B cell (primary cell): ENCODE measurements at regions of chr19 and their contacts with region 1.

Region 1: DNA sequence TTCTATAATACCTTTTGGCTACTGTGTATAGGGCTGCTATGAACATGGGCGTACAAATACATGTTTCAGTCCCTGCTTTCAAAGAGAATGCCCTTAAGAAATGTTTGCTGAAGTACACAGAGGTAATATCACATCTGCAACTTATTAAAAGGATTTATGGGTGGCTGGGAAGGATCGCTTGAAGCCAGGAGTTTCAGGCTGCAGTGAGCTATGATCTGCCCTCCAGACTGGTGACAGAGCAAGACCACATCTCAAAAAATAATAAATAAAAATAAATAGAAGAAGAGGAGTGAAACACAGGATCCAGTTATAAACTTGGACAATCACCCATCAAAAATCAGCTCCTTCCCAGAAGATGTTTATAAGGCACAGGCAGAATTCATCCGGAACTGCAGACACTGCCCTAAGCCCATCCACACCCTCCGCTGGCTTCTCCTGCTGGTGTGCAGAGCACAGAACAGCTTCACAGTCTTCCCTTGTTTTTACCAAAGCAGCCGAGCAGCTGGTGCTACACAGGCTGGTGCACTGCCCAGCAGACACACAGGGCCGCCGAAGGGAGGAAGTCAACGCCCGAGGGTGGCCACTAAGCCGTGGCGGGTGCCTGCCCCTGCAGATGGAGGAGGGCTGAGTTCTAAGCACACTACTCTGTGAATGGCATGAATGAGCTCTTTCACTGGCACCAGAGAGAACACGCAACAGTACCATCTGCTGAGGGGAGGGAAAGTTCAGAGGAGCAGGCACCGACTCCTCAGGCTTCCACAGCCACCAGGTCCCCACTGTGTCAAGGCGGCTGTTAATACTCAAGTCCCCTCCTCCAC is 44.0 kb downstream of the BRD4 start:
- DNase-seq: peak; percentile 76
- ATAC-seq: peak; percentile 88
- H3K4me3 ChIP-seq: peak overlapping the region in 4 of 5 experiments; percentile 4 to 35 (median 24)
- H3K4me3 Mint-ChIP-seq: peak overlapping the region; percentile 83
- H3K27ac ChIP-seq: peak overlapping the region; percentile 67 to 71
- H3K27ac Mint-ChIP-seq: peak overlapping the region; percentile 91
- H3K4me1 ChIP-seq: peaks cover 95 to 98% of the 10 kb centered on the region in 2 donors
- H3K4me1 Mint-ChIP-seq: peaks cover 95% of the 10 kb centered on the region
- H3K27me3 ChIP-seq: no peaks in the 10 kb centered on the region
- H3K27me3 Mint-ChIP-seq: no peaks in the 10 kb centered on the region
- CTCF ChIP-seq: no peak

Region 2: DNA sequence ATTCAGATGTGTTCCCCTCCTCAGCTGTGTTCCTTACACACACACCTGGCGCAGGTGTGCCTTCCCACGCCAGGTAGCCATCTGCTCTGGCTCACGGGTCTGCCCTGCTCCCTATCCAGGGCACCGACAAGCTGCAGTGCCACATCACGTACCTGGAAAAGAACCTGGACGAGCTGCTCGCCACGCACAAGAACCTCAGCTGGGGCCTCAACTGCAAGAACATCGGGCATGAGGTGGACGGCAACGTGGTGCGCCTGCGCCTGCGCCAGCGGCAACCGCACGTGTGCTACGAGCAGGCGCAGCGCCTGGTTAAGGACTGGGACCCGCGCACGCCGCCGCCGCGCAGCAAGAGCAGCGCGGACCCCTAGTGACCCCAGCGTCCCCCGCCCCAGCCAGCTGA is 265.6 kb before region 1 on chr19:
- CTCF ChIA-PET with region 1: no interaction called
- POLR2A ChIA-PET with region 1: no interaction called
- intact Hi-C with region 1: no loop called
- DNase-seq: no peak
- ATAC-seq: no peak
- H3K4me3 ChIP-seq: no peak overlapping the region
- H3K4me3 Mint-ChIP-seq: no peak overlapping the region
- H3K27ac ChIP-seq: no peak overlapping the region
- H3K27ac Mint-ChIP-seq: no peak overlapping the region
- H3K4me1 ChIP-seq: no peaks in the 10 kb centered on the region
- H3K4me1 Mint-ChIP-seq: no peaks in the 10 kb centered on the region
- H3K27me3 ChIP-seq: peaks cover 0 to 7% (median 0%) of the 10 kb centered on the region in 4 experiments
- H3K27me3 Mint-ChIP-seq: peaks cover 10% of the 10 kb centered on the region
- CTCF ChIP-seq: no peak

Region 3: DNA sequence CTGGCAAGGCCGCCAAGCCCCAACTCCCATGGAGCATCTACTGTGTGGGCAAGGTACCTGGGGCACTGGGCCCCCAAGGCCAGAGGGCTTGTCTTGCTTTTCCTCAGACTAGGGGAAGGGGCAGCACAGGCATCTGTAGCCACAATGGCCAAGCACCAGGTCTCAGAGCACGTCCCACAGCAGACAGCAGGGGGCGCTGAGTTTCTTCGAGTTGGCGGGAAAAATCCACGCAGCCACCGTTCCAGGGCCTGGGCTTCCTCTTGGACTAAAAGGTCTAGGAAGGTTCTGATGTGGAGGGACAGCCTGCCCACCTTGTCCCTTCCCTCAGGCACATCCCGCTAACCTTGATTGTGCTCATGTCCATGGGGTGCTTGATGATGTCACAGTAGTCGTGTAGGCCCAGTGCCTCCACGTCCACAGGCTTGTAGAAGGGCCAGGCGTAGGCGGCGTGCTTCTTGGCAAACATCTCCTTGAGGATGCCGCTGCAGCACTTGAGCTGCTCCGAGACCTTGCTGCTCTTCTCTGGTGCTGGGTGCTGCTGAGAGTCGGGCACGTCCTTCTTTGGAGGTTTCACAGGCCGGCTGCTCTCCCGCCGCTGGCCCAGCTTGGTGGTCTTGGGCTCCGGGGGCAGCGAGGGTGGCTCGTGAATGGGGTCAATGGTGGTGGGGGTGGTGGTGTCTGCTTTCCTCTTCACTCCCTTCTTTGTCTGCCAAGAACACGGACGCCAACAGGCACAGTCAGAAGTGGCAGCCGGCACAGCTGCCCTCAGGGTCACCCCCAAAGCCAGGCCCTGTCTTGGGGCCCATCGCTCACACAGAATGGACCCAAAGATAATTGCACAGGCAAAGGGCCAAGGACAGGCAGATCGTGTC is 24.1 kb before region 1 on chr19:
- CTCF ChIA-PET with region 1: interaction called, 8 read pairs
- POLR2A ChIA-PET with region 1: no interaction called
- intact Hi-C with region 1: loop called (anchors 1 kb)
- DNase-seq: peak; percentile 82
- ATAC-seq: peak; percentile 67
- H3K4me3 ChIP-seq: no peak overlapping the region
- H3K4me3 Mint-ChIP-seq: no peak overlapping the region
- H3K27ac ChIP-seq: no peak overlapping the region
- H3K27ac Mint-ChIP-seq: no peak overlapping the region
- H3K4me1 ChIP-seq: no peaks in the 10 kb centered on the region
- H3K4me1 Mint-ChIP-seq: peaks cover 2% of the 10 kb centered on the region
- H3K27me3 ChIP-seq: no peaks in the 10 kb centered on the region
- H3K27me3 Mint-ChIP-seq: no peaks in the 10 kb centered on the region
- CTCF ChIP-seq: peak; percentile 90

Region 4: DNA sequence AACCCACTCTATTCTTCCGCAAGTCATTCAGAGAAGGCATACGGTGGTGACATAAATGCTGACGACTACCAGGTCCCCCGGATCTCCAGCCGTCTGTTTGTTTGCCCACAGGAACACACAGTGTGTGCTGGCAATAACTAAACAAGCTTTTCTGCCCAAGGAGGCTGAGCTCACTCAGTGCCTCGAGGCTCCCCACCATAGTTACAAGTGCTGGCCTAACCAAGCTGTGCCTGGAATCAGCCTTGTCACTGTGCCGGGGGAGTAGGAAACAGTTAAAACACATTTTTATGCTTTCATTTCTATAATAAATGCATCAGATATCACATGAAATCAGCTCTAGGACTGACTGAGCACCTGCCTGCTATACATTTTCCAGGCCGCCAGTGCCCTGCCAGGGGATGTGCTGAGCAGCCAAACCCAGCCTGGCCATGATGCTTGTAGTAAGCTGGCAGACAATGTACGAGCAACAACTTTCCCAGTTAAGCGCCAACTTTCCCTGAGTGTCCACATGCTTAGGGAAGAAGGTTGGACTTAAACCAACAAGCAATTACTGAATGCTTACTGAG is 15.9 kb after region 1 on chr19:
- CTCF ChIA-PET with region 1: interaction called, 8 read pairs
- POLR2A ChIA-PET with region 1: interaction called, 4 read pairs
- intact Hi-C with region 1: loop called (anchors 2 kb)
- DNase-seq: no peak
- ATAC-seq: no peak
- H3K4me3 ChIP-seq: no peak overlapping the region
- H3K4me3 Mint-ChIP-seq: peak overlapping the region; percentile 56
- H3K27ac ChIP-seq: peak overlapping the region in 1 of 2 donors; percentile 45
- H3K27ac Mint-ChIP-seq: peak overlapping the region; percentile 28
- H3K4me1 ChIP-seq: peaks cover 76 to 78% of the 10 kb centered on the region in 2 donors
- H3K4me1 Mint-ChIP-seq: peaks cover 79% of the 10 kb centered on the region
- H3K27me3 ChIP-seq: no peaks in the 10 kb centered on the region
- H3K27me3 Mint-ChIP-seq: no peaks in the 10 kb centered on the region
- CTCF ChIP-seq: no peak

Region 5: DNA sequence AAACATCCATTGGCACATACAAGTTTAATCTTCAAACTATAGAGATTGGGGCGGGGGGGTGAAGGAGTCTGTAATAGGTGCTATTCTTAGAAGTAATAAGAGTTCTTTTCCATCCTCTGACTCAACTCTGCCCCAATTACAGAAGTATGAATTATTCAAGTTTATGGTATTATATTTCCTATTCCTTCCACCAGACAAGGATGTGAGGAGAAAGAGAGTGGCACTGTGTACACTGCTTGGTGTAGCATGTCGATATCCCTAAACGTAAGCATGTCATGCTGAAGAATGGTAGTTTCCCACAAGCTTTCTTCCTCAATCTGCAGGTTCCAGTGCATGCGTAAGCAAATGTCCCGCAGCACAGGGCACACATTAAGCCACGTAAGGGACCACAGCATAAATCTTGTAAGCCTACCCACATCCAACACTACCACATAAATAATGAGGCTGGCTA is 29.9 kb after region 1 on chr19:
- CTCF ChIA-PET with region 1: interaction called, 9 read pairs
- POLR2A ChIA-PET with region 1: no interaction called
- intact Hi-C with region 1: loop called (anchors 1 kb)
- DNase-seq: peak; percentile 88
- ATAC-seq: peak; percentile 81
- H3K4me3 ChIP-seq: peak overlapping the region in 1 of 5 experiments; percentile 5
- H3K4me3 Mint-ChIP-seq: peak overlapping the region; percentile 72
- H3K27ac ChIP-seq: peak overlapping the region; percentile 79 to 86
- H3K27ac Mint-ChIP-seq: peak overlapping the region; percentile 86
- H3K4me1 ChIP-seq: peaks cover 85 to 97% of the 10 kb centered on the region in 2 donors
- H3K4me1 Mint-ChIP-seq: peaks cover 87% of the 10 kb centered on the region
- H3K27me3 ChIP-seq: no peaks in the 10 kb centered on the region
- H3K27me3 Mint-ChIP-seq: no peaks in the 10 kb centered on the region
- CTCF ChIP-seq: no peak

Region 6: GRCh38 chr19:15323496-15324227 is 35.3 kb after region 1 on chr19:
- CTCF ChIA-PET with region 1: interaction called, 14 read pairs
- POLR2A ChIA-PET with region 1: interaction called, 4 read pairs
- intact Hi-C with region 1: loop called (anchors 1 kb)
- DNase-seq: no peak
- ATAC-seq: no peak
- H3K4me3 ChIP-seq: no peak overlapping the region
- H3K4me3 Mint-ChIP-seq: peak overlapping the region; percentile 54
- H3K27ac ChIP-seq: peak overlapping the region in 1 of 2 donors; percentile 75
- H3K27ac Mint-ChIP-seq: peak overlapping the region; percentile 80
- H3K4me1 ChIP-seq: peaks cover 90 to 95% of the 10 kb centered on the region in 2 donors
- H3K4me1 Mint-ChIP-seq: peaks cover 88% of the 10 kb centered on the region
- H3K27me3 ChIP-seq: no peaks in the 10 kb centered on the region
- H3K27me3 Mint-ChIP-seq: no peaks in the 10 kb centered on the region
- CTCF ChIP-seq: no peak

Region 7: GRCh38 chr19:15332311-15332996 is 44.1 kb after region 1 on chr19 and contains the start of gene BRD4:
- CTCF ChIA-PET with region 1: interaction called, 14 read pairs
- POLR2A ChIA-PET with region 1: interaction called, 22 read pairs
- intact Hi-C with region 1: loop called (anchors 1 kb)
- DNase-seq: peak; percentile 89
- ATAC-seq: peak; percentile 37
- H3K4me3 ChIP-seq: peak within 1 kb of the TSS; percentile 78 to 99 (median 85)
- H3K4me3 Mint-ChIP-seq: peak within 1 kb of the TSS; percentile 97
- H3K27ac ChIP-seq: peak within 1 kb of the TSS; percentile 92 to 96
- H3K27ac Mint-ChIP-seq: peak within 1 kb of the TSS; percentile 96
- H3K4me1 ChIP-seq: peaks cover 42 to 62% of the 10 kb centered on the region in 2 donors
- H3K4me1 Mint-ChIP-seq: peaks cover 52% of the 10 kb centered on the region
- H3K27me3 ChIP-seq: no peaks in the 10 kb centered on the region
- H3K27me3 Mint-ChIP-seq: no peaks in the 10 kb centered on the region
- CTCF ChIP-seq: no peak
- total RNA-seq, gene BRD4: 209 and 233 TPM in 2 replicates

Region 8: GRCh38 chr19:15379083-15379995 is 91.0 kb after region 1 on chr19 and contains the start of gene AKAP8:
- CTCF ChIA-PET with region 1: interaction called, 3 read pairs
- POLR2A ChIA-PET with region 1: interaction called, 13 read pairs
- intact Hi-C with region 1: loop called (anchors 1 kb)
- DNase-seq: peak; percentile 99
- ATAC-seq: peak; percentile 91
- H3K4me3 ChIP-seq: peak within 1 kb of the TSS; percentile 87 to 99 (median 94)
- H3K4me3 Mint-ChIP-seq: peak within 1 kb of the TSS; percentile 97
- H3K27ac ChIP-seq: peak within 1 kb of the TSS; percentile 92 to 97
- H3K27ac Mint-ChIP-seq: peak within 1 kb of the TSS; percentile 100
- H3K4me1 ChIP-seq: peaks cover 26 to 27% of the 10 kb centered on the region in 2 donors
- H3K4me1 Mint-ChIP-seq: peaks cover 39% of the 10 kb centered on the region
- H3K27me3 ChIP-seq: no peaks in the 10 kb centered on the region
- H3K27me3 Mint-ChIP-seq: no peaks in the 10 kb centered on the region
- CTCF ChIP-seq: no peak
- total RNA-seq, gene AKAP8: 80.0 and 84.8 TPM in 2 replicates